ENCODE measurements at regions of chr14 and their contacts with region 1.

Region 1: GRCh38 chr14:55085060-55085660 is 33.7 kb downstream of the MAPK1IP1L start:
- DNase-seq: no peak
- H3K4me3 ChIP-seq: no peak overlapping the region
- H3K27ac ChIP-seq: no peak overlapping the region
- H3K4me1 ChIP-seq: no peaks in the 10 kb centered on the region
- CTCF ChIP-seq: no peak

Region 2: GRCh38 chr14:55129428-55130195 is 44.5 kb after region 1 on chr14:
- CTCF ChIA-PET with region 1: no interaction called
- POLR2A ChIA-PET with region 1: no interaction called
- intact Hi-C with region 1: loop called (anchors 5 kb)
- DNase-seq: no peak
- H3K4me3 ChIP-seq: no peak overlapping the region
- H3K27ac ChIP-seq: no peak overlapping the region
- H3K4me1 ChIP-seq: no peaks in the 10 kb centered on the region
- CTCF ChIP-seq: no peak

Region 3: DNA sequence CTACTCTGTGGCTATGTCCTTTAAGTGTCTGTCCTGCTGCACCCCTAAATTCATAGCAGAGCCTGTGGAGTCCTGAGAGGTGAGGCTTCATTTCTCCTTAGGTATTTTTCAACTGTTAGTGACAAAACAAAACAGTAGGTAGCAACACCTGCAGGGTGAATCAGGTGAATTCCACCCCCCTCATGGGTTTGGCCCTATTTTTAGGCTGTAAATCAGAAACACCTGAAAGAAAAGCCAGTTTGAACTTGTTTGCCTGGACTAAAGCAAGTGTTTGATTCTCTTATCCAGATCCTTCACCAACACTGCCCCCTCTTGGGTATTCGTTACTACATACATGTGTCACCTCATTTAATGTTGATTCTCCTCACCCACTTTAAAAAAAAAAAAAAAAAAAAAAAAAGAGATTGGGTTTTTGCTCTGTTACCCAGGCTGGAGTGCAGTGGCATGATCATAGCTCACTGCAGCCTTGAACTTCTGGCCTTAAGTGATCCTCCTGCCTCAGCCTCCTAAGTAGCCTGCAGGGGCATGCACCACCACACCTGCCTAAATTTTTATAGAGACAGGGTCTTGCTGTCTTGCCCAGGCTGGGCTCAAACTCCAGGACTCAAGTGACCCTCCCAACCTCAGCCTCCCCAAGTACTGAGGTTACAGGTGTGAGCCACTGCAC is 345.0 kb after region 1 on chr14:
- CTCF ChIA-PET with region 1: interaction called, 3 read pairs
- POLR2A ChIA-PET with region 1: no interaction called
- intact Hi-C with region 1: loop called (anchors 10 kb)
- DNase-seq: peak; percentile 80
- H3K4me3 ChIP-seq: no peak overlapping the region
- H3K27ac ChIP-seq: no peak overlapping the region
- H3K4me1 ChIP-seq: peaks cover 7% of the 10 kb centered on the region
- CTCF ChIP-seq: peak; percentile 77

Measured in OCI-LY7 (cell line).